Activated T-helper 2 cell treated with anti-CD3 and anti-CD28 coated beads, Interferon-gamma antibody, Interleukin-2, Interleukin-4, amounts not matched to agents 10 μg/mL and 5 μg/mL and 100 μg/mL, durations not matched to agents 14 hours and 24 hours and 36 hours (primary cell): ENCODE measurements at regions of chr7 and their contacts with region 1.

Region 1: DNA sequence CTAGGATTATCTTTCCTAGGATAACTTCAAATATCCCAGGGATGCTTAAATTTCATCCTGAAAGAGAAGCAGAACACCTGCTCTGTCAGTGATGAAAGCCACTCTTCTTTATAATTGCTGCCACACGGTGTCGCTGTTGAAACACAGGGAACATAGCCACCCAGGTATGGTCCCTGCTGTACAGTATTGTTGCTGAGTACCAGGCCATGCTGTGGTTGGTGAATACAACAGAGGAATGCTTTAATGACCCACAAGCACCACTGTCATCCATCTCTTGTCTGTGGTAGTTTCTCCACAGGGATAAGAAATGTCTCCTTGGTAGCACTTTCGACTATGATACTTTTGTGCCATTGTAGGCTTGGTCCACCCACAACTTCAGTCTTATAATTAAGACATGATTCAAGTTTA is 70.6 kb upstream of the STARD3NL start:
- DNase-seq: peak; percentile 42
- H3K4me3 Mint-ChIP-seq: no peak overlapping the region
- H3K27ac Mint-ChIP-seq: no peak overlapping the region
- H3K4me1 Mint-ChIP-seq: peaks cover 2% of the 10 kb centered on the region
- H3K27me3 Mint-ChIP-seq: peaks cover 42% of the 10 kb centered on the region

Region 2: GRCh38 chr7:37916673-37917660 is 190.5 kb before region 1 on chr7 and contains the start of gene SFRP4:
- intact Hi-C with region 1: loop called (anchors 5 kb)
- DNase-seq: no peak
- H3K4me3 Mint-ChIP-seq: peak within 1 kb of the TSS; percentile 6
- H3K27ac Mint-ChIP-seq: no peak within 1 kb of the TSS
- H3K4me1 Mint-ChIP-seq: peaks cover 12% of the 10 kb centered on the region
- H3K27me3 Mint-ChIP-seq: peaks cover 75% of the 10 kb centered on the region
- total RNA-seq, gene SFRP4: not detected in 2 replicates

Region 3: GRCh38 chr7:38178004-38178694 is 70.7 kb after region 1 on chr7 and contains the start of gene STARD3NL:
- intact Hi-C with region 1: loop called (anchors 5 kb)
- DNase-seq: peak; percentile 87
- H3K4me3 Mint-ChIP-seq: peak within 1 kb of the TSS; percentile 95
- H3K27ac Mint-ChIP-seq: peak within 1 kb of the TSS; percentile 89
- H3K4me1 Mint-ChIP-seq: peaks cover 36% of the 10 kb centered on the region
- H3K27me3 Mint-ChIP-seq: no peaks in the 10 kb centered on the region
- total RNA-seq, gene STARD3NL: 39.2 and 42.4 TPM in 2 replicates

Region 4: GRCh38 chr7:38215735-38216670 is 108.5 kb after region 1 on chr7:
- intact Hi-C with region 1: loop called (anchors 2 kb)
- DNase-seq: peak; percentile 70
- H3K4me3 Mint-ChIP-seq: no peak overlapping the region
- H3K27ac Mint-ChIP-seq: no peak overlapping the region
- H3K4me1 Mint-ChIP-seq: peaks cover 36% of the 10 kb centered on the region
- H3K27me3 Mint-ChIP-seq: no peaks in the 10 kb centered on the region

Region 5: DNA sequence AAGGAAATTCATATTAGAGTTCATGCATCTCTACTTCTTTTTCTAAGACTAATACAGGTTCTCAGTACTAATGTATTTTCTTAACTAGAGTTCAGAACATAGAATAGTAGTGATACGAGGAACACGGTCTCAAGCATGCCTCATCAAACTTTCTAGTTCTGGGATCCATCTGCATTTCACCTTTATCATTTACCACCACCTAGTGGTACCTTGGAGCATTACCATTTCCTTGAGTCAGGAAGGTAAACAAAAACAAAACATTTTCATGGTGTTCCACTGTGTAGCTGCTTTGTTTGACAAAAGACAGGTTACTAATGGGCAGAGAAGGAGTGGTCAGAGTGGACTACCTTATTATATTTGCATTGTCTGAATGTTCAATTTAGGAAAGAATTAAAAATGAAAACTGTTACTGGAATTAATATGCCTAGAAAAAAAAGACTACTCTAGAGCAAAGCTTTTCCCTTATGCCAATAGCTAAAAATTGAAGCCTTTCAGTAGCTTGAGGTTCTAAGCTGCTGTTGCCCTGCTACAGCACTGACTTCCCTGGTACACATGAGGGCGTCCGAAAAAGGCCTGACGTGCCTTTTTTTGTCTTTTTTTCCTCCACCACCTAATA is 115.1 kb after region 1 on chr7:
- intact Hi-C with region 1: loop called (anchors 1 kb)
- DNase-seq: no peak
- H3K4me3 Mint-ChIP-seq: no peak overlapping the region
- H3K27ac Mint-ChIP-seq: no peak overlapping the region
- H3K4me1 Mint-ChIP-seq: peaks cover 35% of the 10 kb centered on the region
- H3K27me3 Mint-ChIP-seq: no peaks in the 10 kb centered on the region

Region 6: DNA sequence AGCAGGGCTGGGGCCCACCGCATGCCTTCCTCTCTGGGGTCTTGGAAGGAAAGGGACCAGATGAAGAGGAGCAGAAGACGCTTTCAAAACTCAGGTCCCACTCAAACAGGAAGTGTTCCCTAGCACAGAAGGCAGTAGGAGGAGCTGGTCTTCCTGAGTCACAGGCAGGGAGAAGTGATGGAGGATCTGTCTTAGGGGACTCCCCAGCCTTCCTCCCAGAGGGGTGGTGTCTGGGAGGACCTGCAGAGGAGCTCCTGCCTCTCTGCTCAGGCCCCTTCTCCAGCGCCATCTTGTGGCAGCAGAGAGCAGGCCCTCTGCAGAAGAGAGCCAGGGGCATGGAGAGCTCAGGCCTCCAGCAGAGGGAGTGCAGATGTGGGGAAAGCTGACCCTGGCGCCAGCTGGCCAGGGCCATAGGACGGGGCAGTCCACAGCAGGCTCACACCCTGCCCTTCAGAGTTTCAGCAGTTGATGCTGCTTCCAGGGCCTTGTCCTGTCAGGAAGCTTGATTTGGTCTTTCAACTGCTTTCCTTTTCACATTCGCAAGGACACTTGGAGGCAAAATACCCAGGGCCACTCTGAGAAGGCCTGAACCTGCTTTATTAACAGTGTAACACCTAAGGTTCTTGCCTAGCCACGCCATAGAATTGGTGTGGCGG is 228.1 kb after region 1 on chr7:
- intact Hi-C with region 1: loop called (anchors 1 kb)
- DNase-seq: peak; percentile 71
- H3K4me3 Mint-ChIP-seq: peak overlapping the region; percentile 72
- H3K27ac Mint-ChIP-seq: peak overlapping the region; percentile 65
- H3K4me1 Mint-ChIP-seq: peaks cover 42% of the 10 kb centered on the region
- H3K27me3 Mint-ChIP-seq: no peaks in the 10 kb centered on the region

Region 7: GRCh38 chr7:38369816-38370493 is 262.5 kb after region 1 on chr7:
- intact Hi-C with region 1: loop called (anchors 1 kb)
- DNase-seq: peak; percentile 66
- H3K4me3 Mint-ChIP-seq: no peak overlapping the region
- H3K27ac Mint-ChIP-seq: peak overlapping the region; percentile 61
- H3K4me1 Mint-ChIP-seq: peaks cover 38% of the 10 kb centered on the region
- H3K27me3 Mint-ChIP-seq: no peaks in the 10 kb centered on the region